Activated T-helper 2 cell treated with anti-CD3 and anti-CD28 coated beads, Interferon-gamma antibody, Interleukin-2, Interleukin-4, amounts not matched to agents 10 μg/mL and 5 μg/mL and 100 μg/mL, durations not matched to agents 14 hours and 24 hours and 36 hours (primary cell): ENCODE measurements at regions of chr17 and their contacts with region 1.

Region 1: DNA sequence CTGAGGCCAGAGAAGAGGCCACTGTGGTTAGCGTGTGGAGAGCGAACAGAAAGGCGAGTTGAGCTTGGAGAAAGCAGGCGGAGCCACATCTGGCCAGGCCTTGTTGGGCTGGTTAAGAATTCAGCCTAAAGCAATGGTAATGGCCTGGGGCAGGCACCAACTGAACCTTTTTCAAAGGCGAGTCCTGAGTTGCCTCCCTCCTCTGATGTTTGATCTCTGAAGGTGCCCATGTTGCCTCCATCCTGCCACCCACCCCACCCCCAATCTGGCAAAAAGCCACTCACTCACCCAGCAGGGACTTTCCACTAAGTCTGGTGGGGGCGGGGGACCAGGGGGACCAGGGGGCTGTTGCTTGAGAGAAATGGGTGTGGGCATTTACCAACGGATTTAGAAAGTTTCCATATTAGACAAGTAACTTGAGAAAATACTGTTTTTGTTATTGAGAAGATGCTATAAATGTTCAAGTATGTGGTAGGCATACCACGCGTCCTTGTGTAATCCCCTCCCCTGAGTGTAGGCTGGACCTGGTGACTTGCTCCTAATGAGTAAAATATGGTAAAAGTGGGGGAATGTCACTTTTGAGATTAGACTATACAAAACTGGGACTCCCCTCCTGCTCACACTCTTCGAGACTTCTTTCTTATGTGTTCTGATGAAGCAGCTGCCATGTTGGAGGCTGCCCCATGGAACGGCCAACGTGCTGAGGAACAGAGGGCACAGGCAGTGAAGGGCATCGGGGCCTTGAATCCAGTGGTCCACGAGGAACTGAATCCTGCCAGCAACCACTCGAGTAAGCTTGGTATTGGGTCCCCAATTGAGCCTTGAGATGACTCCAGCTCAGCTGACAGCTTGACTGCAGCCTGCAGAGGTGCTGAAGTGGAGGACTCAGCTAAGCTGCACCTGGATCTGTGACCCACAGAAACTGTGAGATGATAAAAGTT is 29.9 kb upstream of the TNS4 start:
- DNase-seq: peak; percentile 48
- H3K4me3 Mint-ChIP-seq: peak overlapping the region; percentile 79
- H3K27ac Mint-ChIP-seq: peak overlapping the region; percentile 92
- H3K4me1 Mint-ChIP-seq: peaks cover 69% of the 10 kb centered on the region
- H3K27me3 Mint-ChIP-seq: no peaks in the 10 kb centered on the region

Region 2: DNA sequence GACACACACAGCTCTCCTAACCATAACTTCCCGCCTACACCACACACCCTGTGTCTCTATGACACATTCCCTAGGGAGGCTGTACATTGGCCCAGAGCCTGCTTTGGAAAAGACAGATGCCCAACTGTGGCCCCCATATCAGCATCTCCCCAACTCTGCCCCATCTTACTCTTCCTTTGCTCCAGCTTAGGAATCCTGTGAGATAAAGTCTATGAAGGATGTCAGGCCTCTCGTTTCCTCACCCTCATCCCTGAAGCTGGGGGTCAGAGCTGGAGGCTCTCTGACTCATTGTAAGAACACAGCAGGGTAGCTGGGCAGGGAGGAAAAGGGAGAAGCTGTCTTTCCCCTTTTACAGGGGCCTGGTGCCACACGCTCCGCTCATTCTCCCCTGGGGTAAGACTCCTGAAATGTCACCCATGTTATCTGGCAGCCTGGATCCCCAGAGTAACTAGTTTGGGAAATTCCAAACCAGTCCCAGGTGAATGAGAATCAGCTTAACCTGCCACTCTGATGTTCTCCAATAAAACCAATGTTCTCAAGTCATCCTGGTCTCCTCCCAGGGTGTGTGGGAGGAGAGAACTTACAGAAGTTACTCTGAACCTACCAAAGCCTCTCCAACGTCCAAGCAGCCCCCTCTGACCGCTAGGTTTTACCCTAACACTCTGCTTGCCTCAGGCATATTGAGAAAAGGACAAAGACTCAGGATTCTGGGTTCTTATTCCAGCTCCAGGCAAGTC is 351.2 kb before region 1 on chr17:
- intact Hi-C with region 1: no loop called
- DNase-seq: no peak
- H3K4me3 Mint-ChIP-seq: no peak overlapping the region
- H3K27ac Mint-ChIP-seq: no peak overlapping the region
- H3K4me1 Mint-ChIP-seq: peaks cover 9% of the 10 kb centered on the region
- H3K27me3 Mint-ChIP-seq: no peaks in the 10 kb centered on the region

Region 3: GRCh38 chr17:40362696-40363110 is 168.6 kb before region 1 on chr17:
- intact Hi-C with region 1: loop called (anchors 1 kb)
- DNase-seq: peak; percentile 85
- H3K4me3 Mint-ChIP-seq: peak overlapping the region; percentile 73
- H3K27ac Mint-ChIP-seq: no peak overlapping the region
- H3K4me1 Mint-ChIP-seq: peaks cover 17% of the 10 kb centered on the region
- H3K27me3 Mint-ChIP-seq: peaks cover 2% of the 10 kb centered on the region

Region 4: DNA sequence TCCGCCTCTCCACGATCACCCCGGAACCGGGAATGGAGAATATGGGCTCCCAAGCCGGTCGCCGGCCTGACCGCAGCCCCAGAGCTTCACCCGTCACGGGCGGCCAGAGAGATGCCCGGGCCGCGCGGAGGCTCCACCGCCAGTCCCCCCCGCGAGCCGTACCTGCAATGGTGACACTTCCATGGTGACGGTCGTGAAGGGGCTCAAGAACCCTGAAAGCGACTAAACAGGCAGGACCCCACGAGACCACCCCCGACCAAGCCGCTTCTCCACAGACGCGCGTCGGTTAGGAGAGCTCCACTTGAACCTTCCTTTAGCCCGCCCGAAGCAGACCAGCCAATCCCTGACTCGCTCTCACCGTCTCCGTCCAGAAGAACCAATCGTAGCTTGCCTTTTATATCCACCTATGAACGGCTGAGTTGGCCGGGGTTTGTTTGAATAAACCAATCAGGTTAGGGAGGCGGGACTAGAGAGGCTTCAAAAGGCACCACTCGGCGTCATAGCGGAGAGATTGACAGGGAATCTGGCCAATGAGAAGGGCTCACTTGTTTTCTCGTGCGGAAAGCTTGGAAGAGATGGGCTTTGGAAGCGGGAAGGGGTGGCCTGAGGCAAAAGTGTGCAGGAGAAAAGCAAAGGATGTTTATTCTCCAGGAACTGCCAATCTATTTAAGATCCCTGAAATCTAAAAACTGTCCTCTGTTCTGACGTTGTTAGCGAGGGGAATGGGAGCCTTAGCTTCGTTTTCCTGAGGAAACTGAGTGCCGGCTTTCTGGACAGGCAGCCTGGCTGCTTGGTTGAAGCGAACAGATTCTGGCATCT is 113.5 kb before region 1 on chr17 and contains the start of gene TOP2A:
- intact Hi-C with region 1: loop called (anchors 1 kb)
- DNase-seq: peak; percentile 98
- H3K4me3 Mint-ChIP-seq: peak within 1 kb of the TSS; percentile 95
- H3K27ac Mint-ChIP-seq: peak within 1 kb of the TSS; percentile 93
- H3K4me1 Mint-ChIP-seq: peaks cover 25% of the 10 kb centered on the region
- H3K27me3 Mint-ChIP-seq: no peaks in the 10 kb centered on the region
- total RNA-seq, gene TOP2A: 193 and 199 TPM in 2 replicates

Region 5: GRCh38 chr17:40480501-40481003 is 50.8 kb before region 1 on chr17:
- intact Hi-C with region 1: loop called (anchors 1 kb)
- DNase-seq: peak; percentile 82
- H3K4me3 Mint-ChIP-seq: peak overlapping the region; percentile 73
- H3K27ac Mint-ChIP-seq: peak overlapping the region; percentile 96
- H3K4me1 Mint-ChIP-seq: peaks cover 70% of the 10 kb centered on the region
- H3K27me3 Mint-ChIP-seq: no peaks in the 10 kb centered on the region

Region 6: DNA sequence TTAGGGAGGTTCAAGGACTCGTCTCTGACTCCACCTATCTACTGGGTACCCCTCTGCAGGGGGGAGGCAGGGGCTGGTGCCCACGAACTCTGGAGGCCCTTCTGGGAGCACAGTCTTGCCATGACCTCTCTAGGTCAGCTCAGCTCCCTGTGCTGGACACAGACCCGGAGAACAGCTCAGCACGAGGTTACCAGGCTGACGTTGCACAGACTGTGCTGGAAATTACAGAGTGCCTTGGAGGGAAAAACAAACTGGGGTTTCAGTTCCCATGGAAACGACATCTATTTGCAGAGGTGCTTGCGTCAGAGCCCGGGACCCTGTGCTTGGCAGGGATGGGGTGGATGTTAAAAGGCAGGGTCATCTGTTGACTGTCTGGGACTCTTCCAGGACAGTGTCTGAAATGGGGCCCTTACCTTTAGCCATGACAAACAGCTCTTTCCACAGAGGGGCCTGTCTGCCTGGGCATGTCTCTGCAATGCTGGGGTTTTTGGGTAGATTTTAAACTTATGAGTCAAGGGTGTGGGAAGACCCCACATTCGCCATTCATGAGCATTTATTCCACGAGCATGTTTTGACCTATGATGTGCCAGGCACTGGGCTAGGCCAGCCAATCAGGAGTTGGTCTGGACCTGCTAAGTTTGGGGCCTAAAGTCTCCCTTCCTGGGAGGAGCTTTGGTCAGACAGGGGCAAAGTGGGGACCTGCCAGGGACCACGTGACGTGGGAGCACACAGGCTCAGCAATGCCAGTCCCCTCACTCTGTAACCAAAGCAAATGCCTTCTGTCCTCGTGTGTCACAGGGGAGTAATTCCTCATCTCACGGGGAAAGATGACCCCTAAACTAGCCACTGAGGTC is 11.5 kb after region 1 on chr17:
- intact Hi-C with region 1: loop called (anchors 1 kb)
- DNase-seq: no peak
- H3K4me3 Mint-ChIP-seq: peak overlapping the region; percentile 65
- H3K27ac Mint-ChIP-seq: peak overlapping the region; percentile 94
- H3K4me1 Mint-ChIP-seq: peaks cover 68% of the 10 kb centered on the region
- H3K27me3 Mint-ChIP-seq: no peaks in the 10 kb centered on the region

Region 7: DNA sequence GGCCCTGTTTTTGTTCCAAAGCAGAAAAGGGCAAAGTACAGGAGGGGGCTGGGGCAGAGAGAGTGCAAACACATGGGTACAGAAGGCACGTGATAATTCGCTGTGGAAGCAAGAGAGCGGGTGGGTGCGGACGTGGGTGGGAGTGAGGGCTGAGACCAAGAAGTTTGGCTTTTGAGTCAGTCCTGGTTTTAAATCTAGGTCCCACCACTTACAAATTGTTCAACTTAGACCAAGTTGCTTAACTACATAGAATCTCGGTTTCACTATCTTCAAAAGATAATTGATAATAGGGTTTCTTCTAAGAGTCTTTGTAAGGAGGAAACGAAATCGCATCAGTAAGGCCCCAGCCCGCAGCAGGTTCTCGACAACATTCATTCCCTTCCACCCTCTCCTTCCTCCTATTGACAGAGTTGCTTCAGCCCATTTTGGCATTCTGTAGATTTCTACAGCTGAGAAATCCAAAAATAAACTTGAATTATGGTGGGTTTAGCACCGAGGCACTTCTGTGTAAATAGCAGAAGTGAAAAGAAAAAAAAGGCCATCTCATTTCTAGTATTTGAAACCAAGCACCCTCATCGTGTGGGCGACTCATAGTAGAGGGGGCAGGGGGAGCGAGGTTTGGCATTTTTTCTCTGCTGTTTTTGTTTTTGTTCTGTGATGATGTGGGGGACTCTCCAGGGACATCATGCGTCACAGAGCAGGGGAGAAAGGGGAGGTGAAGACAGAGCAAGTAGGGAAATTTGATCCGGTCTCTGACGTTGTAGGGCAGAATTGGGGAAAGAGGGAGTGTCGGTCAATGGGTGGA is 67.5 kb after region 1 on chr17:
- intact Hi-C with region 1: loop called (anchors 2 kb)
- DNase-seq: no peak
- H3K4me3 Mint-ChIP-seq: peak overlapping the region; percentile 54
- H3K27ac Mint-ChIP-seq: peak overlapping the region; percentile 89
- H3K4me1 Mint-ChIP-seq: peaks cover 83% of the 10 kb centered on the region
- H3K27me3 Mint-ChIP-seq: no peaks in the 10 kb centered on the region